ENCODE measurements at regions of chr5 and their contacts with region 1.

Region 1: GRCh38 chr5:151447174-151448037 is at the start of gene SLC36A1:
- DNase-seq: peak; percentile 83
- H3K4me3 ChIP-seq: peak within 1 kb of the TSS; percentile 56 to 77 (median 77)
- H3K27ac ChIP-seq: peak within 1 kb of the TSS; percentile 20
- H3K4me1 ChIP-seq: peaks cover 13% of the 10 kb centered on the region
- H3K27me3 ChIP-seq: peaks cover 2% of the 10 kb centered on the region
- CTCF ChIP-seq: peak; percentile 93 to 94
- total RNA-seq, gene SLC36A1: 9.7 to 11.0 TPM

Region 2: GRCh38 chr5:151463137-151464029 is 16.0 kb after region 1 on chr5:
- CTCF ChIA-PET with region 1: no interaction called
- dilution Hi-C with region 1: no loop called
- in situ Hi-C with region 1: no loop called
- intact Hi-C with region 1: no loop called
- DNase-seq: no peak
- H3K4me3 ChIP-seq: no peak overlapping the region
- H3K27ac ChIP-seq: no peak overlapping the region
- H3K4me1 ChIP-seq: no peaks in the 10 kb centered on the region
- H3K27me3 ChIP-seq: no peaks in the 10 kb centered on the region
- CTCF ChIP-seq: peak; percentile 13 to 37

Region 3: GRCh38 chr5:151499501-151500035 is 52.2 kb after region 1 on chr5:
- CTCF ChIA-PET with region 1: no interaction called
- dilution Hi-C with region 1: no loop called
- in situ Hi-C with region 1: loop called in 1 of 2 experiments (anchors 5 kb)
- intact Hi-C with region 1: loop called (anchors 1 kb)
- DNase-seq: no peak
- H3K4me3 ChIP-seq: no peak overlapping the region
- H3K27ac ChIP-seq: no peak overlapping the region
- H3K4me1 ChIP-seq: no peaks in the 10 kb centered on the region
- H3K27me3 ChIP-seq: no peaks in the 10 kb centered on the region
- CTCF ChIP-seq: no peak

Region 4: DNA sequence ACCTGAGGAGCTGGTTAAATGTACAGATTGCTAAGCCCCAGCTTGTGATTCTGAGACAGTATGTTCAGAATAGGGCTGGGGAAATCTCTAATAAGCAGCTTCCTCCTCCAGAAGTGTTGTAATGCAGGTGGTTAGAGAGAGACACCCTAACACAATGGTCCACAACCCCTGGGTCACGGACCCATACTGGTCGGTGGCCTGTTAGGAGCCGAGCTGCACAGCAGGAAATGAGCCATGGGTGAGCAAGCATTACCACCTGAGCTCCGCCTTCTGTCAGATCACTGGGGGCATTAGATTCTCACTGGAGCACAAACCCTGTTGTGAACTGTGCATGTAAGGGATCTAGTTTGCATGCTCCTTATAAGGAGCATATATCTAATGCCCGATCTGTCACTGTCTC is 61.8 kb after region 1 on chr5:
- CTCF ChIA-PET with region 1: no interaction called
- dilution Hi-C with region 1: loop called (anchors 5 kb)
- in situ Hi-C with region 1: loop called in 1 of 2 experiments (anchors 5 kb)
- intact Hi-C with region 1: no loop called
- DNase-seq: peak; percentile 82
- H3K4me3 ChIP-seq: no peak overlapping the region
- H3K27ac ChIP-seq: no peak overlapping the region
- H3K4me1 ChIP-seq: peaks cover 19% of the 10 kb centered on the region
- H3K27me3 ChIP-seq: no peaks in the 10 kb centered on the region
- CTCF ChIP-seq: no peak

Region 5: GRCh38 chr5:151523335-151523734 is 75.9 kb after region 1 on chr5:
- CTCF ChIA-PET with region 1: no interaction called
- dilution Hi-C with region 1: no loop called
- in situ Hi-C with region 1: no loop called
- intact Hi-C with region 1: loop called (anchors 1 kb)
- DNase-seq: peak; percentile 59
- H3K4me3 ChIP-seq: no peak overlapping the region
- H3K27ac ChIP-seq: no peak overlapping the region
- H3K4me1 ChIP-seq: no peaks in the 10 kb centered on the region
- H3K27me3 ChIP-seq: no peaks in the 10 kb centered on the region
- CTCF ChIP-seq: peak; percentile 61 to 63

Region 6: DNA sequence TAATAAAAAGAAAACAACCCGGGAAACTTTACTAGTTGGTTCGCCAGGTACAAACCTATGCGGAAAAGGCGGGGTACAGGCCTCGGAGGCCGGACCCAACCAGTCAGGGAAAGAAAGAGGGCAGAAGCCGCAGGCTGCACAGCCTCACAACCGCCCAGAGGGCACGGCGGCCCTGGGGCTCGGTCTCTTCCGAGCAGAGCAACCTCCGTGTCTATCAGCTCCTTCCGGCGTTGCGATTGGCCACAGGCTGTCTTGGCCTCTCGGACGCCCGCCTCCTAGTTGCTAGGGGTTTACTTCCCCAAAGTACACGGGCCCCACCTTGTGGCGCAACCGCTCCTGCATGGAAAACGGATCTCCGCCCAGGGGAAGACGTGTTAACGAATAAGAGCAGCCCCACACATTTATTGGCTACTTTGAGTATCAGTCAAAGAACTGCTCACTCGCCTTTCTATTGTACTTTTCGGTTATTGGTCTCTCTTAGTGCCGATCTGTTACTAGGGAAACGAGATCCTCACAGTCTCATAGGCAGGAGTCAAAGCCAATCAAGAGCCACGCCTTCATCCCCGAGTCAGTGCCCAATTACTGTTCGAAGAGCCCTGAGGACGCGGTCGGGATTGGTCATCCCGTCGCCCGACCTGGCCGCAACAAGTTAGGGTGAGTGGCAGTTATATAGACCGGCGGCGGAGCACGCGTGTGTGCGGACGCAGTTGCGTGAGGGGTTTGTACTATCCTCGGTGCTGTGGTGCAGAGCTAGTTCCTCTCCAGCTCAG is 324.0 kb after region 1 on chr5 and contains the start of gene G3BP1:
- CTCF ChIA-PET with region 1: no interaction called
- dilution Hi-C with region 1: no loop called
- in situ Hi-C with region 1: no loop called
- intact Hi-C with region 1: loop called (anchors 1 kb)
- DNase-seq: peak; percentile 100
- H3K4me3 ChIP-seq: peak within 1 kb of the TSS; percentile 63 to 93 (median 80)
- H3K27ac ChIP-seq: peak within 1 kb of the TSS; percentile 84
- H3K4me1 ChIP-seq: peaks cover 26% of the 10 kb centered on the region
- H3K27me3 ChIP-seq: no peaks in the 10 kb centered on the region
- CTCF ChIP-seq: peak; percentile 36 to 77
- total RNA-seq, gene G3BP1: 193 to 252 TPM

Measured in mammary epithelial cell (primary cell).